Aorta (tissue), 5 donors: ENCODE measurements at regions of chr4 and their contacts with region 1.

Region 1: GRCh38 chr4:131430302-131430701 is 1718.8 kb upstream of the PCDH10 start:
- DNase-seq: no peak
- ATAC-seq: no peak
- H3K4me3 ChIP-seq: no peak overlapping the region
- H3K27ac ChIP-seq: no peak overlapping the region
- H3K4me1 ChIP-seq: no peaks in the 10 kb centered on the region
- H3K27me3 ChIP-seq: no peaks in the 10 kb centered on the region

Region 2: DNA sequence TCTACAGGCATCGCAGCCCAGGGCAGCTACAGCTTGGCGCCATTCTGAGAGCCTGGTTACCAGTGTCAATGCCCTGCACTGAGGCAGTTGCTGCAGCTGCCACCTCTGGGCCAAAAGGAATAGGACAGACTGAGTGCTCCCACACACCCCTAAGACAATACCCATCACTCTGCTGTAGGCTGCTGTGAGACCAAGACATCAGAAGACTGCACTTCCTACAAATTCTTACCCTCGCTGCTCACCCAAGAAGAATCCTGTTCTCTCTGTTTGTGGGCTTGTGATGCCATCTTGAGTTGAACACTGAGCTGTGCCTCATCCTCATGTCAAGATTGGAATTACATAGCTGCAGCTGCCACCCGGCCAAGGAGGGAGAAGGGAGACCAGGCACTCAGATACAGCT is 128.2 kb before region 1 on chr4:
- intact Hi-C with region 1: no loop called
- DNase-seq: peak in 1 of 2 donors; percentile 16
- ATAC-seq: no peak
- H3K4me3 ChIP-seq: no peak overlapping the region
- H3K27ac ChIP-seq: no peak overlapping the region
- H3K4me1 ChIP-seq: no peaks in the 10 kb centered on the region
- H3K27me3 ChIP-seq: no peaks in the 10 kb centered on the region

Region 3: GRCh38 chr4:131488772-131489171 is 58.5 kb after region 1 on chr4:
- intact Hi-C with region 1: loop called in 1 of 2 experiments (anchors 2 kb)
- DNase-seq: no peak
- ATAC-seq: no peak
- H3K4me3 ChIP-seq: no peak overlapping the region
- H3K27ac ChIP-seq: no peak overlapping the region
- H3K4me1 ChIP-seq: no peaks in the 10 kb centered on the region
- H3K27me3 ChIP-seq: no peaks in the 10 kb centered on the region